Motor neuron (in vitro differentiated cells): ENCODE measurements at regions of chr3 and their contacts with region 1.

Region 1: DNA sequence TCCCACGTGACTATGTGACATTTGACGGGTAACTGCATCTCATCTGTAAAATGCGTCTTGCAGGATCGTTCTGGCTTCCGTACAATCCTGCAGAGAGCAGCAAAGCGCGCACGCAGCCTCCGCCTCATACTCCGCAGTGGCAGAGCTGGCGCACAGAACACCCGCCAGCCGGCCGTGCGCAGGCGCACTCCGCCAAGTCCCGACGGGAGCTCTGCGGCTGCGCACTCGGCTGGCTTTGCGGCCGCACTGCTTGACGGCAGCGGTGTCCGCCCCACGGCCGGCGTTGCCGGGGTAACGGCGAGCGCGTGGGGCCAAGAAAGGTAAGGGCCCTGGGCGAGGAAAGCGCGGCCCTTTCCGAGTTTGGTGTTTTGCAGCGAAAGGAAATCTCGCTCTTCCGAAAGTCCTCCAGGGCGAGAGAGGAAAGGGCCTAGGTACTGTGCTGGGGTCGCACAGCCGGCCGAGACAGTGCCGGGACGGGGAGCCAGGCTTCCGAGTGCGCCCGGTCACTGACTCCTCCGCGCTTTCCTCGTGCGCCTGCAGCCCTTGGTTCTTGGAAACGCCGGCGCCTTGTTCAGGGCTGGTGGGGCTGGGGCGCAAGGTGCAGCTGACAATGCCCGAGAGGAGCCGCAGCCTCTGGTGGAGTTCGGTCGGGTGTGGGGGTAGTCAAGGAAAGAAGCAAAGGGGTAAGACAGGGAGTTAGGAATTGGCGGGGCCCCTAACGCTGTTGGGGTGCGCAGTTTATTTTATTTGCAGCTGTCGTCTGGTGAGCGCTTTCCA is at the start of gene TSEN2:
- ATAC-seq: peak; percentile 88 to 99 (median 98)
- H3K4me3 ChIP-seq: peak within 1 kb of the TSS; percentile 59 to 81 (median 75)
- H3K27ac ChIP-seq: peak within 1 kb of the TSS; percentile 69 to 83
- H3K4me1 ChIP-seq: peaks cover 9 to 12% of the 10 kb centered on the region in 2 donors
- total RNA-seq, gene TSEN2: 17.4 to 41.4 (median 20.8) TPM

Region 2: DNA sequence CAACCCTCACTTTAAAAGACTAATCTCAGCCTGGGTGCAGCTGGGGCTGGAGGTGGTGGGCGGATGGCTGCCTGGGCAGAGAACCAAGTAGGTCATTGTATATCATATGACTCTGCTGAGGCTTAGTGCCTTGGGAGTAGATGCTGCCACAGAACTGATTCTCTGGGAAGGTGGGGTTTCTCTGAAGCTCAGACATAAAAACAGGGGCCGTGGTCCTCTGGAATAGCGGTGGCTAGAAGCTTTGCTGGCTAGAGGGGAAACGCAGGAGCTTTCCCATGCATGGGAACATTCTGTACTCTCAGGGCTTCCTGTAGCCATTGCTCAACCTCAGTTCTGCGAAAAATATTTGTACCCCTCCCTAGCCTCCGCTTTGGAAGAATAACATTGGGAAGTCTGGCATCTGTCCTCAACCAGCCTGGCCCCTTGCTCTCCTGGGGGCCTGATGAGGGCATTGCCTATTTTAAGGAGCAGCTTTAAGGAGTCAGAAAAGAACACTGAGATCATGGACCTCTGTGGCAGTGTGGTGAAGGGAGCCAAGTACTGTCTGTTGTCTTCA is 340.4 kb before region 1 on chr3:
- in situ Hi-C with region 1: loop called in 3 of 9 experiments (anchors 10 to 25 kb)
- ATAC-seq: peak in 3 of 8 experiments; percentile 27 to 70 (median 60)
- H3K4me3 ChIP-seq: no peak overlapping the region
- H3K27ac ChIP-seq: no peak overlapping the region
- H3K4me1 ChIP-seq: peaks cover 0 to 7% of the 10 kb centered on the region in 2 donors